ENCODE measurements at regions of chr18 and their contacts with region 1.

Region 1: GRCh38 chr18:2857491-2858131 is 10.8 kb downstream of the EMILIN2 start:
- DNase-seq: peak; percentile 38 to 75 (median 48)
- ATAC-seq: peak; percentile 87
- H3K4me3 ChIP-seq: no peak overlapping the region
- H3K27ac ChIP-seq: peak overlapping the region in 1 of 4 donors; percentile 67
- H3K4me1 ChIP-seq: peaks cover 6% of the 10 kb centered on the region
- H3K27me3 ChIP-seq: no peaks in the 10 kb centered on the region
- CTCF ChIP-seq: no peak
- POLR2A ChIP-seq: no peak

Region 2: DNA sequence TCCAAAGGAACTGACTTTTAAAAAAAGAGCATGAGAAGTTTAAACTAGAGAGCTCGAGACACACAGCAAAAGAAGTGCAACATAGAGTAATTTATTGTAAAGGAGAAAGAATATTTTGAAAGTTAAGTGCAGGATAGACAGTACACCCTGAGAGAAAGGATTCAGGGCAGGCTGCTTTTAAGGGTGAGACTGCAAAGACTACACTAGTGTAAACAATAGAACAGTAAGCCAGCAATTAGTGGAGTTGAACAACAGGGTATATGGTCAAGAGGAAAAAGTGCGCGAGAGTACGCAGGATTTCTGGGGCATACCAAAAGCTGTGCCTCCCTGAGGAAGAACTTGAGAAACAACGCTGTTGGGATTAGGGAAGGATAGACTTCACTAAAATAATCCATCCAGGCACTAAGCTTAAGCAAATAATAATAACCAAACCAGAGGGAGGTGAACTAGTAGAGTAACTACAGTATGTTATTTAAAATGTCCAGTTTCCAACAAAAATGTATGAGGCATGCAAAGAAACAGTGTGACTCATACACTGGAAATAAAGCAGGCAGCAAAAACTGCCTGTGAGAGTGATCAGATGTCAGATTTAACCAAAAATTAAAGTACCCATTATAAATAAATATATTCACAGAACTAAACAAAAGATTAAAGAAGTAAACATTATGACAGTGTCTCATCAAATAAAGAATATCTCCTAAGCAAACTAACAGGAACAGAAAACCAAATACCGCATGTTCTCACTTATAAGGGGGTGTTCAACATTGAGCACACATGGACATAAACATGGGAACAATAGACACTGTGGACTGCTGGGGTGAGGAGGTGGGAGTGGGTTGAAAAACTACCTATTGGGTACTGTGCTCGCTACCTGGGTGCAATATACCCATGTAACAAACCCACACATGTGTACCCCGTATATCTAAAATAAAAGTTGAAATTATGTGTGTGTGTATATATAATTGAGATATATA is 51.4 kb before region 1 on chr18:
- intact Hi-C with region 1: no loop called
- DNase-seq: no peak
- ATAC-seq: no peak
- H3K4me3 ChIP-seq: no peak overlapping the region
- H3K27ac ChIP-seq: no peak overlapping the region
- H3K4me1 ChIP-seq: no peaks in the 10 kb centered on the region
- H3K27me3 ChIP-seq: no peaks in the 10 kb centered on the region
- CTCF ChIP-seq: no peak
- POLR2A ChIP-seq: no peak

Region 3: DNA sequence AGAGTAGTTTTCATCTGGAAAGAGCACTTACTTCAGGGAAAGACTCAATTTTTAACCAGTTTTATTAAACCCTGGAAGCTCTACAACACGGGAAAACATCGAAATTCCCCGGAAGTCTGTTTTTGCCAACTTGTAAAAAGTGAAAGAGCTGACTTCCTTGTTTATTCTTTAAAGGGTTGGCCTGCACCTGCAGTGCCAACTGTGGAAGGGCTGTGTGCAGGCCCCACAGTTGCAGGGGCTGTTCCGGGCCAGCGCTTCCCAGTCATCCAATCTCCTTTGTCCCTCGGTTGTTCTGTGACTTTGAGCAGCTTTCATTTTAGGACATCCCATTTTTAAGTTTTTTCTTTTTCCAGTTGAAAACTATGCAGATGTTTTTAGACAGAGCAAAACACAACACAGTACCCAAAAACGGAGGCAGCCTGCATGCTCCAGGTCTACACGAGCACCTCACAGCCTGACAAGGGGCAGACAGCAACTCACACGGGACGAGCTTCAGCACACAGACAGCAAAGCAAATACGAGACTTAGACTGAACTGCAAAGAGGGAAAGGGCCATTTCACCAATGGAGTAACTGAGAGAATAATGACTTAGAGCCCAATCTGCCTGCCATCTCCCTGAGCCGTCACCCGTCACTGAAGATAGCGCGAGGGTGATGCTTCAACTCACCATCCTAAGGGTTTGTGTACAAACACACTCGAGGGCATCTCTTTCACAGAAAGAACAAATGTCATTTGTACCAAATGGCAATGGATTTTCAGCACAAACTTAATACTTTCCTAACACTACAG is 59.8 kb after region 1 on chr18:
- intact Hi-C with region 1: loop called (anchors 10 kb)
- DNase-seq: no peak
- ATAC-seq: no peak
- H3K4me3 ChIP-seq: no peak overlapping the region
- H3K27ac ChIP-seq: peak overlapping the region in 1 of 4 donors; percentile 28
- H3K4me1 ChIP-seq: peaks cover 10% of the 10 kb centered on the region
- H3K27me3 ChIP-seq: no peaks in the 10 kb centered on the region
- CTCF ChIP-seq: no peak
- POLR2A ChIP-seq: no peak

Measured in body of pancreas (tissue), 4 donors.